IMR-90 (cell line): ENCODE measurements at regions of chr12 and their contacts with region 1.

Region 1: DNA sequence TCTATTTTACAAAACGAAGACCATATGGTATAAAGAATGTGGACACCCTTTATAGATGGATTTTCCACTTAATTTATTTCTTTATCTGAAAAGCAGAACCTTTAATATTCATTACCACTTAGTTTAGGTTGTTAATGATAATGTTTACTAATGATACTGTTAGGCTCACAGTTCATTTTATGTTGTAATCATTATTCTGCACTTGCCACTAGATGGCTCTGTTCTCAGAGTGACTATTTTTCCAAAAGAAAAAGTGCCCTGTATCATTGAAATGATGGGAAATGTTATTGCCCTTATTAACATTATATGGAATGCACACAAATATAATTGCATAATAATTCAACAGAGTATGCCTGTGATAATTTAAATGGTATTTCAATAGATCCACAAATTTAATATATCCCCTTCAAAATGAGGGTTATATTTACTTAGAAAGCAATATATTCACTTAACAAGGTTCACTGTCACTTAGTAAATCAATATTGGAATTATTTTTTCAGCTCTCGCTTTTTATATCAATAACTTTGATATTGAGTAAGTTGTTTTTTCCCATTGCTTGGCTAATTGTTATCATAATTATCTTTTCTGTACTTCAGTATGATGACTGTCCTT is 95.7 kb downstream of the PDE3A start:
- DNase-seq: peak; percentile 16
- ATAC-seq: peak; percentile 56
- H3K4me3 ChIP-seq: no peak overlapping the region
- H3K27ac ChIP-seq: no peak overlapping the region
- H3K4me1 ChIP-seq: peaks cover 5% of the 10 kb centered on the region; the same call in 1 of the 2 replicates
- H3K27me3 ChIP-seq: no peaks in the 10 kb centered on the region
- CTCF ChIP-seq: peak; percentile 63
- POLR2A ChIP-seq: no peak
- RAD21 ChIP-seq: peak; percentile 60

Region 2: GRCh38 chr12:20096430-20096829 is 367.6 kb before region 1 on chr12:
- CTCF ChIA-PET with region 1: no interaction called
- POLR2A ChIA-PET with region 1: no interaction called
- dilution Hi-C with region 1: no loop called
- in situ Hi-C with region 1: no loop called
- intact Hi-C with region 1: no loop called
- DNase-seq: peak; percentile 10
- ATAC-seq: no peak
- H3K4me3 ChIP-seq: no peak overlapping the region
- H3K27ac ChIP-seq: no peak overlapping the region
- H3K4me1 ChIP-seq: peaks cover 9% of the 10 kb centered on the region
- H3K27me3 ChIP-seq: no peaks in the 10 kb centered on the region
- CTCF ChIP-seq: no peak
- POLR2A ChIP-seq: no peak
- RAD21 ChIP-seq: no peak

Region 3: GRCh38 chr12:20549107-20549719 is 85.2 kb after region 1 on chr12:
- CTCF ChIA-PET with region 1: interaction called, 5 read pairs
- POLR2A ChIA-PET with region 1: no interaction called
- dilution Hi-C with region 1: no loop called
- in situ Hi-C with region 1: no loop called
- intact Hi-C with region 1: loop called (anchors 1 kb)
- DNase-seq: peak; percentile 56
- ATAC-seq: peak; percentile 89
- H3K4me3 ChIP-seq: no peak overlapping the region
- H3K27ac ChIP-seq: no peak overlapping the region
- H3K4me1 ChIP-seq: no peaks in the 10 kb centered on the region
- H3K27me3 ChIP-seq: no peaks in the 10 kb centered on the region
- CTCF ChIP-seq: peak; percentile 72
- POLR2A ChIP-seq: no peak
- RAD21 ChIP-seq: peak; percentile 62

Region 4: GRCh38 chr12:20596061-20596460 is 132.0 kb after region 1 on chr12:
- CTCF ChIA-PET with region 1: no interaction called
- POLR2A ChIA-PET with region 1: no interaction called
- dilution Hi-C with region 1: no loop called
- in situ Hi-C with region 1: loop called (anchors 10 kb)
- intact Hi-C with region 1: loop called (anchors 1 kb)
- DNase-seq: no peak
- ATAC-seq: no peak
- H3K4me3 ChIP-seq: no peak overlapping the region
- H3K27ac ChIP-seq: no peak overlapping the region
- H3K4me1 ChIP-seq: no peaks in the 10 kb centered on the region
- H3K27me3 ChIP-seq: no peaks in the 10 kb centered on the region
- CTCF ChIP-seq: no peak
- POLR2A ChIP-seq: no peak
- RAD21 ChIP-seq: no peak

Region 5: DNA sequence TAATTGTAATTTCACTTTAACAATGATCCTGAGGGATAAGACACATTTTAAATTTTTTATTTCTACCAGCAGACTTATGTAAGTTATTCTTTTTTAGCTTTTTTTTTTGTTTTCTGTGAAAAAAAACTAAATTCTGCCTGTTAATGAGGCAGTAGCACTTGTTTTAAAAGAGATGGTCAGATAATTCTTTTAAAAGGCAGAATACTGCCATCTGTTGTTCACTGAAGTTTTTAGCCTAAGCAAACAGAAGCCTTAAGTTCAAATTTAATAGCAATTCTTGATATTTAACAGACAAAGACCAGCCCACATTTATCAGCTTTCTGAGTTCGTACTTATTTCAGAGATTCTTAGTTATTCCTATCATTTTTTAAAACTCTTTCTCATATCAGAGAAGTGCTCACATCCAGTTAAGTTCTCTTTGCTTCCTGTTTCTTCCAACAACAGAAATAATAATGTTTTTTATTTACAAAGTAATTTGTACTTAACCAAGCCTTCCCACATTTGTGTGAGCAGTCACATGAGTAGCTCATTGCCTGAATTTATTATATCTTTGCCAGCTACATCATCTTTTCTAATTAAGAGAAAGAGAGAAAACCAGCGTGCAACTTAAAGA is 137.8 kb after region 1 on chr12:
- CTCF ChIA-PET with region 1: interaction called, 4 read pairs
- POLR2A ChIA-PET with region 1: no interaction called
- dilution Hi-C with region 1: no loop called
- in situ Hi-C with region 1: loop called (anchors 10 kb)
- intact Hi-C with region 1: loop called (anchors 1 kb)
- DNase-seq: peak; percentile 73
- ATAC-seq: peak; percentile 52
- H3K4me3 ChIP-seq: no peak overlapping the region
- H3K27ac ChIP-seq: no peak overlapping the region
- H3K4me1 ChIP-seq: no peaks in the 10 kb centered on the region; the same call in 1 of the 2 replicates
- H3K27me3 ChIP-seq: no peaks in the 10 kb centered on the region
- CTCF ChIP-seq: peak; percentile 66
- POLR2A ChIP-seq: no peak
- RAD21 ChIP-seq: peak; percentile 54

Region 6: DNA sequence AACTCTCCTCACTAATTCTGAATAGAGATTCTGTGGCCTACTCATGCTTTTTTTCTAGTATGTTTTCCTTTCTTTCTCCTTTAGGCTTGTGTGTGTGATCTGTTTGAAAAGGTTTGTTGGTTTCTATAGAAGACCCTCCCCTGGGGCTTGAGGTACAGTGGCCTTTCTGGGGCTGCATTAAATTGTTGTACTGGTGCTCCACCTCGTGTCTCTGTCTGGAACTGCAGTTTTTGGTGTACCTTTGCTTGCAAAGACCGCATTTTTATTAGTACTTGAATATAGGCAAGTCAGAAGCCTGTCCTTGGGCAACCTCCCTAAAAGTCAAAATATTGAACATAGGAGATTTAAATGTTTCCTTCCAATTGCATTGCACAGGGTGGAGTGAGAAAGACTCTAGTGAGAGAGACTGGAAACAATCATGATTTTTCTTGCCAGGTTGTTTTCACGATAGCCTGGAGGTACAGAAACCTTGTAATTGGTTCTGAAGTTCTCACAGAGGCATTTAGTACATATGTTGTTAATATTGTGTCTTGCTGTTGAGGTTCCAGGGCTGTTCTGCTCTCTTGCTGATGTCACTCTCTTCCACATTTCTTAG is 706.0 kb after region 1 on chr12:
- CTCF ChIA-PET with region 1: no interaction called
- POLR2A ChIA-PET with region 1: no interaction called
- dilution Hi-C with region 1: no loop called
- in situ Hi-C with region 1: loop called (anchors 25 kb)
- intact Hi-C with region 1: no loop called
- DNase-seq: peak; percentile 25
- ATAC-seq: peak; percentile 77
- H3K4me3 ChIP-seq: no peak overlapping the region
- H3K27ac ChIP-seq: no peak overlapping the region
- H3K4me1 ChIP-seq: no peaks in the 10 kb centered on the region
- H3K27me3 ChIP-seq: no peaks in the 10 kb centered on the region
- CTCF ChIP-seq: peak; percentile 56
- POLR2A ChIP-seq: no peak
- RAD21 ChIP-seq: peak; percentile 59

Region 7: GRCh38 chr12:21438643-21439042 is 974.6 kb after region 1 on chr12:
- CTCF ChIA-PET with region 1: no interaction called
- POLR2A ChIA-PET with region 1: interaction called, 13 read pairs
- dilution Hi-C with region 1: no loop called
- in situ Hi-C with region 1: no loop called
- intact Hi-C with region 1: no loop called
- DNase-seq: peak; percentile 12
- ATAC-seq: no peak
- H3K4me3 ChIP-seq: no peak overlapping the region
- H3K27ac ChIP-seq: no peak overlapping the region
- H3K4me1 ChIP-seq: no peaks in the 10 kb centered on the region; the same call in 1 of the 2 replicates
- H3K27me3 ChIP-seq: no peaks in the 10 kb centered on the region; the same call in 1 of the 2 replicates
- CTCF ChIP-seq: no peak
- POLR2A ChIP-seq: no peak
- RAD21 ChIP-seq: no peak